ENCODE measurements at regions of chr10 and their contacts with region 1.

Region 1: DNA sequence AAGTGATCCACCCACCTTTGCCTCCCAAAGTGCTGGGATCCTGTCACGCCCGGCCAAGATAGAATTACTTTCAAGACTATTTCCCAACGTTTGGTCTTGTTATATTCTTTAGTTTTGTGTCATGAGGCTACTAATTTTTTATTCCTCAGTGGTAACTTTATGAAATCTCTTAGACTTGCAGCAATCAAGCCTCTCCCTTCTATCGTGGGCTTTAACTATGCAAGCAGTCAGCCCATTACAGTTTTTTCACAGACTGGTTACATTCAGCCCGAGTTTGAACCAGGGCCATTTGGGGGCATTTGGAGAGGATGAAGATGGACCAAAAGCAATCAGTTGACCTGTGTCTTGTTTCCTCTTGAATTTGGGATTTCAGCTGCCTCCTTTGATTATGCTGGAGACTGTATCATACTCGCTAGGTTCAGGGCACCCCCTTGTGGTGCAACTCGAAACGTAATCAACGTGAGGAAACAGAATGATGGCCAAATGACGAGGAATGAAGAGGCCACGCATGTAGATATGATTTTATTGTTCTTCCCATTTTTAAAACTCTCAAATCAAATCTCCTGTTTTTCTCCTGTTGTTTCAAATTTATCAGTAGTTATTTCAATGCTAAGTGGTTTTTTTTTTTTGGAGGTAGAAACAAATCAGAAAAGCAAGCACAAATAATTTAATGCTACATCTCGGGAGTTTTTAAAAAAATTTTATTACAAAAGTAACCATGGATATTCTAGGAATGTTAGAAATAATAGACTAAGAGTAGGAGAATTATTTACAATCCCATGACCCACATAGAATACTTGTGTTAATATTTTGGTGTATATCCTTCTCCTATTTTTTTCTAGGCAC is 151.6 kb downstream of the KIAA1217 start:
- DNase-seq: no peak
- H3K4me3 ChIP-seq: no peak overlapping the region
- CTCF ChIP-seq: peak; percentile 81

Region 2: GRCh38 chr10:24197263-24197662 is 163.2 kb before region 1 on chr10:
- CTCF ChIA-PET with region 1: interaction called, 19 read pairs
- POLR2A ChIA-PET with region 1: no interaction called
- DNase-seq: no peak
- H3K4me3 ChIP-seq: no peak overlapping the region
- CTCF ChIP-seq: no peak

Region 3: GRCh38 chr10:24344279-24344678 is 16.2 kb before region 1 on chr10:
- CTCF ChIA-PET with region 1: interaction called, 17 read pairs
- POLR2A ChIA-PET with region 1: no interaction called
- DNase-seq: peak; percentile 98
- H3K4me3 ChIP-seq: no peak overlapping the region
- CTCF ChIP-seq: no peak

Region 4: DNA sequence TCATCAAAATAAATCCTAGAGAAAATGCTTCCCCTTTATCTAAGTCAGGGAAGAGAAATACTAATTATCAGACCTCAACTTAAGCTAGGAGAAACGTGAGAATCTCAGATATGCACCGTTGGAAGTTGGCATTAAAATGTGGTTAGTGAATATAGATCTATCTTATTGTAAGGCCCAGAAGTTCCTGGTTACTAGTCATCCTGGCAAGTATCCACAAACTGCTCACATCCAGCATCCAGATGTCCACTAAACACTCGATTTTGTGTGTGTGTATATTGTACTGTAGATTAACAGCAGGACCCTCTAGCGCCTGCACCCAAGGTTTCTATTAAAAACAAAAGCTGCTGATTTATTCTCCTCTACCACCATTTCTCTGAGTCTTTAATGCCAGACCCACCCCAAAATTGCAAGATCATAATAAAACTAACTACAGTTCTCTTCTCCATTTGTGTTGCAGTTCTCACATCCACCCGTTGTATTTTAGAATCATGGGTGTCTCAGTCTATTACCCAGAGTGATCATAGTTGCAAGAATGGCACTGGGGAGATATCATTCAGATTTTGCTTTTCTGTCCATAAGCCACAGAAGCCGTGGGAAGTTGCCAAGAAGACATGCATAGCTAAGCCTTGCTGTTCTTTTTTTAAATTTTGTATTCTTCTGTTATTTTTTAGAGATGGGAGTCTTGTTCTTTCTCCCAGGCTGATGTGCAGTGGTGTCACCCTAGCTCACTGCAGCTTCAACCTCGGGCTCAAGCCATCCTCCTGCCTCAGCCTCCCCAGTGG is 13.8 kb after region 1 on chr10:
- CTCF ChIA-PET with region 1: interaction called, 13 read pairs
- POLR2A ChIA-PET with region 1: no interaction called
- DNase-seq: peak; percentile 71
- H3K4me3 ChIP-seq: no peak overlapping the region
- CTCF ChIP-seq: no peak

Region 5: GRCh38 chr10:24475617-24476016 is 115.1 kb after region 1 on chr10:
- CTCF ChIA-PET with region 1: no interaction called
- POLR2A ChIA-PET with region 1: no interaction called
- DNase-seq: no peak
- H3K4me3 ChIP-seq: no peak overlapping the region
- CTCF ChIP-seq: no peak

Region 6: GRCh38 chr10:24503461-24504320 is 143.2 kb after region 1 on chr10:
- CTCF ChIA-PET with region 1: interaction called, 30 read pairs
- POLR2A ChIA-PET with region 1: no interaction called
- DNase-seq: no peak
- H3K4me3 ChIP-seq: no peak overlapping the region
- CTCF ChIP-seq: peak; percentile 49

Measured in AG04449 (cell line).